Activated T-helper 2 cell treated with anti-CD3 and anti-CD28 coated beads, Interferon-gamma antibody, Interleukin-2, Interleukin-4, amounts not matched to agents 10 μg/mL and 5 μg/mL and 100 μg/mL, durations not matched to agents 14 hours and 24 hours and 36 hours (primary cell): ENCODE measurements at regions of chr19 and their contacts with region 1.

Region 1: GRCh38 chr19:39846176-39846677 is at the start of gene FBL:
- DNase-seq: peak; percentile 97
- H3K4me3 Mint-ChIP-seq: peak within 1 kb of the TSS; percentile 96
- H3K27ac Mint-ChIP-seq: peak within 1 kb of the TSS; percentile 90
- H3K4me1 Mint-ChIP-seq: peaks cover 38% of the 10 kb centered on the region
- H3K27me3 Mint-ChIP-seq: no peaks in the 10 kb centered on the region
- total RNA-seq, gene FBL: 522 and 547 TPM in 2 replicates

Region 2: DNA sequence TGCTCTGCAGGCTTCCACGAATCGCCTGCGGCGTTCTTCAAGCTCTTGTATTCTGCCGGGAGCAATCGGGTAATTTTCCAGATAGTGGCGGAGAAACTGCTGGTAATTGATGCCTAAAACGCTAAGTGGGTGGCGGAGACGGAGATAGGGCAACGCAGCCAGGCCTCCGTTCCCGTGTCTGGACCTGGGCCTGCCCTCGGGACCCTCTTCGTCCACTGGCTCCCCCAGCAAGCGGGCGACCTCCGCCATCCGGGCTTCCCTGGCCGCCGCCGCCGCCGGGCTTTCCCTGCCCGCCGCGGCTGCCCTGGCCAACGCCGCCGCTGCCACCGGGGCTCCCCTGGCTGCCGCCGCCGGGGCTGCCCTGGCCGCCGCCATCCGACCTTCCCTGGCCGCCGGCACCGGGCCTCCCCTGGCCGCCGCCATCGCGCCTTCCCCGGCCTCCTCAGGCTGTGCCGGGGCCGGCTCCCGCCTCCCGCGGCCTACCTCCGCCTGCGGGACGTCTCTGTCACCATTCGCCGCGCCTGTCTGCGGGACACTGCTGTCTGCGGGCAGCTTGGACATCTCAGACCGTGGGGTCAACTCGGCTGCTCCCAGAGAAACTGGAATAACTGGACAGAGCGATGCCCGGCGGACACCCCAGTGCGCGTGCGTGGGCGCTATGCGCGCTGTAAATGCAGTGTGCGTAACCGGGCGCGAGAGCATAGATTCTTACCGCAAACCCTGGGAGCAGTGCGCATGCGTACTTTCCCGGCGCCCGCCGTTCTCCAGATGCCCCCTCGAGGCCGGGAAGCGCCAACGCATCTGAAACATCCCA is 306.5 kb before region 1 on chr19 and contains the start of gene EID2:
- intact Hi-C with region 1: loop called (anchors 10 kb)
- DNase-seq: peak; percentile 93
- H3K4me3 Mint-ChIP-seq: peak within 1 kb of the TSS; percentile 94
- H3K27ac Mint-ChIP-seq: peak within 1 kb of the TSS; percentile 93
- H3K4me1 Mint-ChIP-seq: peaks cover 25% of the 10 kb centered on the region
- H3K27me3 Mint-ChIP-seq: no peaks in the 10 kb centered on the region
- total RNA-seq, gene EID2: 17.2 and 18.3 TPM in 2 replicates

Region 3: DNA sequence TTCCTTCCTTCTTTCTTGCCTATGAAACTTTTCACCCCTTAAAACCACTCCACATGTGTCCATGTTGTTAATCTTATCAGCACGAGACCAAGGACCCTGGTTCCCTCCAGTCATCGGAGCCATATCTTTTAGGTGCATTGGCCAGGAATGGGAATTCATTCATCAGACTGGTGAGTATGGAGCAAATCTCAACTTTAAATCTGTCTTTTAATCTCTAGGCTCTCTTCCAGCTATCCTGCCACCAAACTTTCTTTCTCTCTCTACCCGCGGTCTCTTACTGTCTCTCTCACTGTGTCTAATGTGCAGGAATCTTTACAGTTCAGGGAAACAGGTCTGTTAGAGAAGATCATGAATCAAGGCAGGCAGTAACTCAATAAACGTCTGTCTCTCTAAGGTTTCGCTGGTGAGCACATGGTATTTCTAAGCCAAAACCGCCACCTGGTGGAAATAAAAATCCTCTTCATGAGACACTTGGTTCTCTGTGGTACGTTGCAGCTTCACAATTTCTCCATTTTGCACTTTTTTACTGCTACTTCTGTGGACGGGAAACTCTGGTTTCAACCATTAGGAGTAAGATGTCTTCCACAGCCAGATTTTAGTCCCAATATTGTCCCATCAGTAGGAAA is 174.4 kb before region 1 on chr19:
- intact Hi-C with region 1: loop called (anchors 10 kb)
- DNase-seq: peak; percentile 31
- H3K4me3 Mint-ChIP-seq: no peak overlapping the region
- H3K27ac Mint-ChIP-seq: no peak overlapping the region
- H3K4me1 Mint-ChIP-seq: peaks cover 22% of the 10 kb centered on the region
- H3K27me3 Mint-ChIP-seq: peaks cover 22% of the 10 kb centered on the region

Region 4: GRCh38 chr19:39792999-39793546 is 53.2 kb before region 1 on chr19:
- intact Hi-C with region 1: loop called (anchors 1 kb)
- DNase-seq: peak; percentile 64
- H3K4me3 Mint-ChIP-seq: peak overlapping the region; percentile 78
- H3K27ac Mint-ChIP-seq: no peak overlapping the region
- H3K4me1 Mint-ChIP-seq: peaks cover 10% of the 10 kb centered on the region
- H3K27me3 Mint-ChIP-seq: peaks cover 22% of the 10 kb centered on the region

Region 5: GRCh38 chr19:39824143-39825092 is 21.8 kb before region 1 on chr19:
- intact Hi-C with region 1: loop called (anchors 1 kb)
- DNase-seq: peak; percentile 86
- H3K4me3 Mint-ChIP-seq: no peak overlapping the region
- H3K27ac Mint-ChIP-seq: no peak overlapping the region
- H3K4me1 Mint-ChIP-seq: peaks cover 7% of the 10 kb centered on the region
- H3K27me3 Mint-ChIP-seq: no peaks in the 10 kb centered on the region

Region 6: DNA sequence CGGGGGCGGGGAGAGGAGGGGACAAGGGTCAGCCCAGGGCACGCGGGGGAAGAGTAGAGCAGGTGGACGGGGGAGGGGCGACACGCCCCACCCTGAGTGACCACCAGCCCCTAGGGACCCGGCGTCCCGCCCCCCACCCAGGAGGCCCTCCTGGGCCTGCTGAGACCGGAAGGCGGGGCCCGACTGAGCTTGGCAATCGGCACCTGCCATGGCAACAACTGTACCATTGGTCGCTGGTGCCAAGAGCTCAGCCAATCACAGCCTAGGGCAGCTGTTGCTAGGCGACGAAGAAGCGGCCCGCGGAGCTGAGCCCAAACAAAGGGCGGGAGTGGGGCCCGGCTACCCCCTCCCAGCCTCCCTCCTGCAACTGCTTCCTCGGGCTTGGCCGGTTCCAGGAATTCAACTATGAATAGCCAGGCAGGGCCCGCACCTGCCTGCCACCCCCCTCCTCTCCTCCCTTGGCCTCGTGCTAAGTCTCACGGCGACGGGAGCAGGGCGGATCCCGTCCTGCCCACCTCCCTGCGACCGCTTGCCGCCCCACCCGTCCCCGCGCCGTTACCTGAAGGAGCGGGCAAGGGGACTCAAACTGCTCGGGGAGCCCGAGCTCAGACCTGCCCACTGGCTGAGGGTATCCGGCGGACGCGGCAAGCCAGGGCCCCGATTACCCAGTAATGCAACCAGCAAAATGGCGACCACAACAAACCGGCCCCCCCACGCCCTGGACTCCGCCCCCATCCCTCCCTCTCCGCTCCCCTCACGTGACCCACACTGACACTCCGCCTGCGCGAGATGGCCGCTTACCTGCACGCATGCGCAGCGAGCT is 12.6 kb before region 1 on chr19 and contains the start of gene DYRK1B:
- intact Hi-C with region 1: loop called (anchors 1 kb)
- DNase-seq: peak; percentile 95
- H3K4me3 Mint-ChIP-seq: peak within 1 kb of the TSS; percentile 76
- H3K27ac Mint-ChIP-seq: peak within 1 kb of the TSS; percentile 76
- H3K4me1 Mint-ChIP-seq: peaks cover 23% of the 10 kb centered on the region
- H3K27me3 Mint-ChIP-seq: no peaks in the 10 kb centered on the region
- total RNA-seq, gene DYRK1B: 6.7 and 7.3 TPM in 2 replicates